ENCODE measurements at regions of chr17 and their contacts with region 1.

Region 1: GRCh38 chr17:8222630-8223356 is 12.4 kb upstream of the AURKB start:
- DNase-seq: peak; percentile 95
- ATAC-seq: peak; percentile 18
- H3K4me3 Mint-ChIP-seq: peak overlapping the region; percentile 99
- H3K27ac Mint-ChIP-seq: peak overlapping the region; percentile 99
- H3K4me1 Mint-ChIP-seq: peaks cover 22% of the 10 kb centered on the region
- H3K27me3 Mint-ChIP-seq: peaks cover 7% of the 10 kb centered on the region
- CTCF ChIP-seq: no peak

Region 2: DNA sequence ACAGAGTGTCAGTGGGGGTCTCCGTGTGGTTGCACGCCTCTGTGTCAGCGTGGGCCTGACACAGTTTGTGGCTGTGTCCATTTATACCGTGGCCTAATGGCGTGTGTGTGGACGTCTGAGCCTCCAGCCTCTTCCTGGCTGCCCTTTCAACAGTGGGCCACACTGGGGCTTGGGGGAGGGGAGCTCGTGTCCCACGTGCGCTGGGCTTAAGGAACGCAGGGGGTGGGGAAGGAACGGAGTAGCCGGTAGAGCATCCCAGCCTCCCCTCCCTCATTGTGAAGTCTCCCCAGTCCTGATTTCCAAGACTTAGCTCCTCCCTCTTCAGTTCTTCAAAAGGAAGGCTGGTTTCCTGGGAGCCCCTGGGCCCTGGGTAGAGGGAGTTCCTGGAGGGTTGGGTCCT is 89.4 kb before region 1 on chr17:
- CTCF ChIA-PET with region 1: interaction called, 10 read pairs
- POLR2A ChIA-PET with region 1: no interaction called
- DNase-seq: peak; percentile 64
- ATAC-seq: peak; percentile 79
- H3K4me3 Mint-ChIP-seq: peak overlapping the region; percentile 24
- H3K27ac Mint-ChIP-seq: peak overlapping the region; percentile 29
- H3K4me1 Mint-ChIP-seq: peaks cover 18% of the 10 kb centered on the region
- H3K27me3 Mint-ChIP-seq: peaks cover 18% of the 10 kb centered on the region
- CTCF ChIP-seq: no peak

Region 3: GRCh38 chr17:8189711-8190477 is 32.9 kb before region 1 on chr17 and contains the start of gene BORCS6:
- CTCF ChIA-PET with region 1: interaction called, 24 read pairs
- POLR2A ChIA-PET with region 1: interaction called, 8 read pairs
- DNase-seq: peak; percentile 95
- ATAC-seq: peak; percentile 56
- H3K4me3 Mint-ChIP-seq: no peak within 1 kb of the TSS
- H3K27ac Mint-ChIP-seq: peak within 1 kb of the TSS; percentile 78
- H3K4me1 Mint-ChIP-seq: peaks cover 7% of the 10 kb centered on the region
- H3K27me3 Mint-ChIP-seq: no peaks in the 10 kb centered on the region; the same call in 1 of the 2 replicates
- CTCF ChIP-seq: no peak
- total RNA-seq, gene BORCS6: 5.0 to 5.6 TPM (median 5.1 TPM) in 3 replicates

Region 4: GRCh38 chr17:8209909-8210760 is 12.7 kb before region 1 on chr17 and contains the start of gene AURKB:
- CTCF ChIA-PET with region 1: interaction called, 9 read pairs
- POLR2A ChIA-PET with region 1: interaction called, 43 read pairs
- DNase-seq: peak; percentile 95
- ATAC-seq: peak; percentile 91
- H3K4me3 Mint-ChIP-seq: peak within 1 kb of the TSS; percentile 89
- H3K27ac Mint-ChIP-seq: peak within 1 kb of the TSS; percentile 96
- H3K4me1 Mint-ChIP-seq: peaks cover 16% of the 10 kb centered on the region
- H3K27me3 Mint-ChIP-seq: no peaks in the 10 kb centered on the region
- CTCF ChIP-seq: no peak
- total RNA-seq, gene AURKB: 180 to 215 TPM (median 183 TPM) in 3 replicates